Pancreas (tissue), 10 donors: ENCODE measurements at regions of chr19 and their contacts with region 1.

Region 1: DNA sequence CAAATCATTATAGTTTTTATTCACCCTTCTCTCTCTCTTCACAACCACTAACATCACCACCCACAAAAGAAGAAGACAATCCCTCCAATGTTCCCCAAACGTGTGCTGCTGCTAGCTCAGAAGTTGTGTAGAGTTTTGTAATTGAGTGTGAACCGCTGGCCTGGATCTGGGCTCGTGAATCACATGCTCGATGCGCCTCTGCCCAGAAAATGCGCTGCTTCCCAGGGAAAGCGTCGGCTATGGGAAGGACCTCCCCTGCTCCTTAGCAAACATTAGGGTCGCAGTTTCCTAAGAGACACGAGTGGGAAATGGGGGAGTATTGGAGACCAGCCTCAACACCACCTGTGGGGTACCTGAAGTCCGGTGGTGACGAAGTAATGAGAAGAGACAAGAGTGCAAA is 38.4 kb upstream of the ZNF726 start:
- DNase-seq: no peak
- ATAC-seq: no peak
- H3K4me3 ChIP-seq: no peak overlapping the region
- H3K27ac ChIP-seq: no peak overlapping the region
- H3K4me1 ChIP-seq: no peaks in the 10 kb centered on the region
- H3K27me3 ChIP-seq: no peaks in the 10 kb centered on the region
- CTCF ChIP-seq: no peak

Region 2: DNA sequence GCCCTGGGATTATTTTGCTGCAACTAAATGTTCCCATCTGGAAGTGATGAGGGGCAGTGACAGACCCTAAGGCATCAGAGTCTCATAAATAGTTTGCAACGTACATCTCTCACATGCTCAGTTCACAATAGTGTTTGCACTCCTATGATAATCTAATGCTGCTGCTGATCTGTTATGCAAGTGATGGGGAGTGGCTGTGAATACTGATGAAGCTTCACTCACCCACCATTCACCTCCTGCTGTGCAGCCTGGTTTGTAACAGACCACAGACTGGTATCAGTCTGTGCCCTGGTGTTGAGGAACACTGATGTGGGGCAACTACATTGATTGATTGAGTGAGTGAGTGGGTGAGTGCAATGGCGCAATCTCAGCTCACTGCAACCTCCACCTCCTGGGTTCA is 93.4 kb after region 1 on chr19:
- intact Hi-C with region 1: loop called (anchors 5 kb)
- DNase-seq: no peak
- ATAC-seq: no peak
- H3K4me3 ChIP-seq: no peak overlapping the region
- H3K27ac ChIP-seq: no peak overlapping the region
- H3K4me1 ChIP-seq: no peaks in the 10 kb centered on the region
- H3K27me3 ChIP-seq: peaks cover 0 to 10% (median 0%) of the 10 kb centered on the region in 4 donors
- CTCF ChIP-seq: no peak

Region 3: GRCh38 chr19:24004166-24004565 is 127.9 kb after region 1 on chr19:
- intact Hi-C with region 1: no loop called
- DNase-seq: no peak
- ATAC-seq: no peak
- H3K4me3 ChIP-seq: no peak overlapping the region
- H3K27ac ChIP-seq: no peak overlapping the region
- H3K4me1 ChIP-seq: no peaks in the 10 kb centered on the region
- H3K27me3 ChIP-seq: no peaks in the 10 kb centered on the region
- CTCF ChIP-seq: no peak